Right ventricle myocardium inferior (tissue), 1 donor: ENCODE measurements at regions of chr2 and their contacts with region 1.

Region 1: GRCh38 chr2:195656859-195657633 is at the start of gene SLC39A10:
- DNase-seq: peak; percentile 99
- ATAC-seq: peak; percentile 93
- total RNA-seq, gene SLC39A10: 7.1 TPM

Region 2: GRCh38 chr2:195575879-195576401 is 81.1 kb before region 1 on chr2:
- intact Hi-C with region 1: loop called (anchors 1 kb)
- DNase-seq: no peak
- ATAC-seq: no peak

Region 3: DNA sequence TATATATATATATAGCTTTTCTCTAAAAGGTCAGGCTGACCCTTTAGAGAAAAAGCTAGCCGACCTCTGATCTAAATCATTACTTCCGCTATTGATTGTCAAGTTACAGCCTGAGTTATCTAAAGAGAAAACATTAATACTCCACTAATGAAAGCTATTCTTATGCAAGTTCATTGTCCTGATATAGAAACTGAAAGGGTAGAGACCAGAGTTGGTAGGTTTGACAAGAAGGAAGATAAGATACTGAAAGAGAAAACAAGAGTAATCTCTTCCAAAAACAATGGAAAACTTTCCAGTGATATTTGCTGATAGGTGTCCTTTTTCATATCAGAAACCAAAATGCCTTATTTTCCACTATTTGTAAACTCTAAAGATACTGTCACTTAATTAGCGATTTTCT is 62.8 kb before region 1 on chr2:
- intact Hi-C with region 1: loop called (anchors 5 kb)
- DNase-seq: no peak
- ATAC-seq: no peak

Region 4: DNA sequence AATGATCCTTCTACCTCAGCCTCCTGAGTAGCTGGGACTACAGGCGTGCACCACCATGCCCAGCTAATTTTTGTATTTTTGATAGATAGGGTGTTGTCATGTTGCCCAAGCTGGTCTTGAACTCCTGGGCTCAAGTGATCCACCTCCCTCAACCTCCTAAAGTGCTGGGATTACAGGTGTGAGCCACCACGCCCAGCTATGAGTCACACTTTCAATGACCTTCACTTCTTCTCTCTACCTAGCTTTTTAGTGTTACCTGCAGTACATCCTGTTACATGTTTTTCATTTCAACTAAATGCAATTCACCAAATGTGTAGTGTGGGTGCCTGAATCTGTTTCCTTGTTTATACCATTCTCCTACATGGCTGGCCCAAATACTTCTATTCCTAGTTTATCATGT is 64.0 kb after region 1 on chr2:
- intact Hi-C with region 1: no loop called
- DNase-seq: no peak
- ATAC-seq: no peak